GM12878 (cell line): ENCODE measurements at regions of chr22 and their contacts with region 1.

Region 1: GRCh38 chr22:34709641-34710040 is 356.3 kb upstream of the ISX start:
- DNase-seq: no peak
- ATAC-seq: no peak
- H3K4me3 ChIP-seq: no peak overlapping the region
- H3K27ac ChIP-seq: no peak overlapping the region
- H3K4me1 ChIP-seq: no peaks in the 10 kb centered on the region
- H3K27me3 ChIP-seq: no peaks in the 10 kb centered on the region
- CTCF ChIP-seq: no peak
- EP300 ChIP-seq: no peak
- POLR2A ChIP-seq: no peak
- RAD21 ChIP-seq: no peak

Region 2: GRCh38 chr22:33971561-33971961 is 738.1 kb before region 1 on chr22:
- CTCF ChIA-PET with region 1: no interaction called
- POLR2A ChIA-PET with region 1: no interaction called
- RAD21 ChIA-PET with region 1: no interaction called
- SMC1A ChIA-PET with region 1: no interaction called
- in situ Hi-C with region 1: loop called (anchors 25 kb)
- intact Hi-C with region 1: no loop called
- DNase-seq: no peak
- ATAC-seq: no peak
- H3K4me3 ChIP-seq: no peak overlapping the region
- H3K27ac ChIP-seq: no peak overlapping the region
- H3K4me1 ChIP-seq: no peaks in the 10 kb centered on the region
- H3K27me3 ChIP-seq: peaks cover 0 to 2% of the 10 kb centered on the region in 2 experiments; a peak in 2 of 4 replicates
- CTCF ChIP-seq: no peak
- EP300 ChIP-seq: no peak
- POLR2A ChIP-seq: no peak
- RAD21 ChIP-seq: no peak

Region 3: DNA sequence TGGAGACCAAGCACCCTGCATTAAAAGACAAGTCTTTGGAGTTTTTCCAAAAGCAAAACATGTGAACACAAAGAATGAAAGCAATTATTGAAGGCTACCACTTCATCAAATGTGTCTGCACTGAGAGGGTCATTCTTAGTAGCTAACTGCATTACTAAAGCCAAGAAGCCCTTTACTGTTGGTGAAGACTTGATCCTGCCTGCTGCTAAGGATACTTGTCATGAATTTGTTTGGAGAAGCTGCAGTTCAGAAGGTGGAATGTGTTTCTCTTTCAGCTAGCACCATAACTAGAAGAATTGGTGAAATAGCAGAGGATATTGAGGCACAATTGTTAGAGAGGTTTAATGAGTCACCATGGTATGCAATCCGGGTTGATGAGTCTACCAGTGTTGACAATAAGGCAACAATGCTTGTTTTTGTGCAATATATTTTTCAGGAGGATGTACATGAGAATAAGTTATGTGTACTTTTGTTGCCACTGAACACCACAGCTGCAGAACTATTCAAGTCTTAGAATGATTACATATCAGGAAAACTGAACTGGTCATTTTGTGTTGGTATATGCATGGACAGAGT is 101.0 kb before region 1 on chr22:
- CTCF ChIA-PET with region 1: no interaction called
- POLR2A ChIA-PET with region 1: no interaction called
- RAD21 ChIA-PET with region 1: no interaction called
- SMC1A ChIA-PET with region 1: no interaction called
- in situ Hi-C with region 1: loop called (anchors 10 kb)
- intact Hi-C with region 1: no loop called
- DNase-seq: no peak
- ATAC-seq: no peak
- H3K4me3 ChIP-seq: no peak overlapping the region
- H3K27ac ChIP-seq: no peak overlapping the region
- H3K4me1 ChIP-seq: no peaks in the 10 kb centered on the region
- H3K27me3 ChIP-seq: no peaks in the 10 kb centered on the region
- CTCF ChIP-seq: no peak
- EP300 ChIP-seq: no peak
- POLR2A ChIP-seq: no peak
- RAD21 ChIP-seq: no peak

Region 4: GRCh38 chr22:34776817-34777216 is 67.2 kb after region 1 on chr22:
- CTCF ChIA-PET with region 1: no interaction called
- POLR2A ChIA-PET with region 1: no interaction called
- RAD21 ChIA-PET with region 1: no interaction called
- SMC1A ChIA-PET with region 1: no interaction called
- in situ Hi-C with region 1: no loop called
- intact Hi-C with region 1: no loop called
- DNase-seq: no peak
- ATAC-seq: no peak
- H3K4me3 ChIP-seq: no peak overlapping the region
- H3K27ac ChIP-seq: no peak overlapping the region
- H3K4me1 ChIP-seq: no peaks in the 10 kb centered on the region
- H3K27me3 ChIP-seq: no peaks in the 10 kb centered on the region
- CTCF ChIP-seq: no peak
- EP300 ChIP-seq: no peak
- POLR2A ChIP-seq: no peak
- RAD21 ChIP-seq: no peak